Gastrocnemius medialis (tissue), 4 donors: ENCODE measurements at regions of chr17 and their contacts with region 1.

Region 1: GRCh38 chr17:59619293-59620063 is at the start of gene CLTC:
- DNase-seq: peak; percentile 87 to 91
- ATAC-seq: peak; percentile 90 to 92
- H3K4me3 ChIP-seq: peak within 1 kb of the TSS; percentile 92 to 99 (median 95)
- H3K27ac ChIP-seq: peak within 1 kb of the TSS; percentile 97 to 99 (median 98)
- H3K4me1 ChIP-seq: peaks cover 45% of the 10 kb centered on the region in 2 donors
- H3K27me3 ChIP-seq: no peaks in the 10 kb centered on the region
- CTCF ChIP-seq: peak in 2 of 5 experiments; percentile 17 to 19
- POLR2A ChIP-seq: peak; percentile 93 to 97
- total RNA-seq, gene CLTC: 140 to 203 (median 172) TPM

Region 2: DNA sequence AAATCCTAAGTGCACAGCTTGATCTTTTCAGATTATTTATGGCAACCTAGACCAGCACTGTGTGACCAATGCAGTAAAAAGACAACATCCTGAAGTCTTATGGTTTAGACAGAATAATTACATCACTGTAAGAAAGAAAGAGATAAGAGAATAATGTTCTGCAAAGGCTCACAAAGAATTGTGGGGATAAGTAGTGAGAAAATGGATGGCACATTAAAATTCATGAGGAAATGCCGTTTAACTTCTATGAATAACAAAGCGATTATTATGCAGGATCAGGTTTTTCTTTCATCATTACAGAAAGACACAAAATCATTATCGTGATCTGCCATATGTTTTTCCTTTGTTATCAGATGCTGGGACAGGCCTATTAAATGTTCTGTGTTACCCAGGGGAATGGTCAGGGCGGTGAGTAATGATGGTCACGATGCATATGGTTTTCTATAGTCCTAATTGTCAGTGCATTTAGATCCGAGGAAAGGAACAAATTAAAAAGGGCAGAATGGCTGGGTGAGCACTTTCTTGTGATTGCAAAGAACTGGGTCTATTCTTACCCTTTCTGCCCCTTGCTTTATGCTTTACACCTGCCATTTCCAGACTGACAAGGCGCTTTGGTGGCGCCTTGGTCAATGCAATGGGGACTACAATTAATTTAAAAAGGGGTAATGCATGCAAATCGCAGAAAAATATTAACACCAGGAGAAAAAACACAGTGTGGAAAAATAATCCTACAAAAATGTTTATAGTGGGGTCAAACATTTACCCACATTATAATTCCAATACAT is 72.2 kb before region 1 on chr17:
- in situ Hi-C with region 1: no loop called
- intact Hi-C with region 1: no loop called
- DNase-seq: no peak
- ATAC-seq: no peak
- H3K4me3 ChIP-seq: no peak overlapping the region
- H3K27ac ChIP-seq: no peak overlapping the region
- H3K4me1 ChIP-seq: no peaks in the 10 kb centered on the region
- H3K27me3 ChIP-seq: no peaks in the 10 kb centered on the region
- CTCF ChIP-seq: no peak
- POLR2A ChIP-seq: no peak

Region 3: GRCh38 chr17:59565171-59565969 is 54.1 kb before region 1 on chr17 and contains the start of gene DHX40:
- in situ Hi-C with region 1: no loop called
- intact Hi-C with region 1: loop called (anchors 10 kb)
- DNase-seq: peak; percentile 91 to 93
- ATAC-seq: peak; percentile 98 to 99
- H3K4me3 ChIP-seq: peak within 1 kb of the TSS; percentile 85 to 100 (median 94)
- H3K27ac ChIP-seq: peak within 1 kb of the TSS; percentile 77 to 95 (median 86)
- H3K4me1 ChIP-seq: peaks cover 8 to 11% of the 10 kb centered on the region in 2 donors
- H3K27me3 ChIP-seq: no peaks in the 10 kb centered on the region
- CTCF ChIP-seq: no peak
- POLR2A ChIP-seq: peak; percentile 34 to 53
- total RNA-seq, gene DHX40: 21.2 to 32.2 (median 26.9) TPM

Region 4: GRCh38 chr17:59641799-59642489 is 22.5 kb after region 1 on chr17:
- in situ Hi-C with region 1: no loop called
- intact Hi-C with region 1: loop called (anchors 1 kb)
- DNase-seq: no peak
- ATAC-seq: no peak
- H3K4me3 ChIP-seq: no peak overlapping the region
- H3K27ac ChIP-seq: peak overlapping the region; percentile 66 to 77 (median 74)
- H3K4me1 ChIP-seq: peaks cover 54 to 71% of the 10 kb centered on the region in 2 donors
- H3K27me3 ChIP-seq: no peaks in the 10 kb centered on the region
- CTCF ChIP-seq: no peak
- POLR2A ChIP-seq: no peak

Region 5: GRCh38 chr17:59707114-59707970 is 87.9 kb after region 1 on chr17 and contains the starts of genes PTRH2 and VMP1:
- in situ Hi-C with region 1: no loop called
- intact Hi-C with region 1: loop called (anchors 2 kb)
- DNase-seq: peak; percentile 98 to 99
- ATAC-seq: peak; percentile 96 to 98
- H3K4me3 ChIP-seq: peak within 1 kb of the TSS; percentile 65 to 90 (median 85)
- H3K27ac ChIP-seq: peak within 1 kb of the TSS; percentile 94 to 96 (median 96)
- H3K4me1 ChIP-seq: peaks cover 35 to 37% of the 10 kb centered on the region in 2 donors
- H3K27me3 ChIP-seq: no peaks in the 10 kb centered on the region
- CTCF ChIP-seq: no peak
- POLR2A ChIP-seq: peak; percentile 88 to 90
- total RNA-seq, gene PTRH2: 17.4 to 18.7 (median 18.1) TPM
- total RNA-seq, gene VMP1: 39.2 to 55.0 (median 48.4) TPM

Region 6: GRCh38 chr17:59892924-59893676 is 273.6 kb after region 1 on chr17 and contains the starts of genes RPS6KB1 and TUBD1:
- in situ Hi-C with region 1: no loop called
- intact Hi-C with region 1: loop called (anchors 5 kb)
- DNase-seq: peak; percentile 97 to 98
- ATAC-seq: peak; percentile 97 to 98
- H3K4me3 ChIP-seq: peak within 1 kb of the TSS; percentile 94 to 99 (median 96)
- H3K27ac ChIP-seq: peak within 1 kb of the TSS; percentile 95 to 98 (median 98)
- H3K4me1 ChIP-seq: peaks cover 32 to 38% of the 10 kb centered on the region in 2 donors
- H3K27me3 ChIP-seq: no peaks in the 10 kb centered on the region
- CTCF ChIP-seq: peak in 1 of 5 experiments; percentile 13
- POLR2A ChIP-seq: peak; percentile 92 to 93
- total RNA-seq, gene RPS6KB1: 38.4 to 58.4 (median 41.6) TPM
- total RNA-seq, gene TUBD1: 5.4 to 9.2 (median 9.2) TPM

Region 7: GRCh38 chr17:60392042-60392844 is 772.8 kb after region 1 on chr17 and contains the start of gene USP32:
- in situ Hi-C with region 1: no loop called
- intact Hi-C with region 1: loop called (anchors 10 kb)
- DNase-seq: peak; percentile 98 to 99
- ATAC-seq: peak; percentile 84 to 85
- H3K4me3 ChIP-seq: peak within 1 kb of the TSS; percentile 74 to 94 (median 90)
- H3K27ac ChIP-seq: peak within 1 kb of the TSS; percentile 96 to 99 (median 98)
- H3K4me1 ChIP-seq: peaks cover 41% of the 10 kb centered on the region in 2 donors
- H3K27me3 ChIP-seq: no peaks in the 10 kb centered on the region
- CTCF ChIP-seq: peak in 4 of 5 experiments; percentile 13 to 51 (median 30)
- POLR2A ChIP-seq: peak; percentile 85 to 90
- total RNA-seq, gene USP32: 44.4 to 83.2 (median 52.5) TPM